CD14-positive monocyte (primary cell): ENCODE measurements at regions of chrX and their contacts with region 1.

Region 1: DNA sequence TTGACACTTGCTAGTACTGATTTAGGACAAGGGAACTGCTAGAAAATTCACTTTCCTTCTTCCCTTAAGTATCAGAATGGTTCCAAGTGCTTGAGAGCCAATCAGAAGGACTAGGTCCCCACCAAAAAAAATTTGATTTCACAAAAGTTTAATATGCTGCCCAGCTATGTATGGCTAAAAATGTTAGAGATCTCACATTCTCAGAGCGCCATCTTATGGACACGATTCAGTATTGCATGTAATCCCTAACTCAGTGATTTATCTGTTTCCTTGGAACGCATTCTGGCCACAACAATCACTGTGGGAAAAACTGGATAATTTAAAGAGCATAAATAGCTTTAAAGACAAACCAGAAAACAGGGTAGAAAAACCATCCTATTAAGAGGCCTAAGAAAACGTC is 255.1 kb upstream of the GPC4 start:
- DNase-seq: peak; percentile 15 to 43 (median 32)
- H3K4me3 ChIP-seq: no peak overlapping the region
- H3K4me3 Mint-ChIP-seq: no peak overlapping the region
- H3K27ac ChIP-seq: no peak overlapping the region
- H3K27ac Mint-ChIP-seq: no peak overlapping the region
- H3K4me1 ChIP-seq: no peaks in the 10 kb centered on the region
- H3K4me1 Mint-ChIP-seq: no peaks in the 10 kb centered on the region
- H3K27me3 ChIP-seq: no peaks in the 10 kb centered on the region
- H3K27me3 Mint-ChIP-seq: peaks cover 0 to 8% (median 0%) of the 10 kb centered on the region in 3 donors
- CTCF ChIP-seq: peak; percentile 71

Region 2: DNA sequence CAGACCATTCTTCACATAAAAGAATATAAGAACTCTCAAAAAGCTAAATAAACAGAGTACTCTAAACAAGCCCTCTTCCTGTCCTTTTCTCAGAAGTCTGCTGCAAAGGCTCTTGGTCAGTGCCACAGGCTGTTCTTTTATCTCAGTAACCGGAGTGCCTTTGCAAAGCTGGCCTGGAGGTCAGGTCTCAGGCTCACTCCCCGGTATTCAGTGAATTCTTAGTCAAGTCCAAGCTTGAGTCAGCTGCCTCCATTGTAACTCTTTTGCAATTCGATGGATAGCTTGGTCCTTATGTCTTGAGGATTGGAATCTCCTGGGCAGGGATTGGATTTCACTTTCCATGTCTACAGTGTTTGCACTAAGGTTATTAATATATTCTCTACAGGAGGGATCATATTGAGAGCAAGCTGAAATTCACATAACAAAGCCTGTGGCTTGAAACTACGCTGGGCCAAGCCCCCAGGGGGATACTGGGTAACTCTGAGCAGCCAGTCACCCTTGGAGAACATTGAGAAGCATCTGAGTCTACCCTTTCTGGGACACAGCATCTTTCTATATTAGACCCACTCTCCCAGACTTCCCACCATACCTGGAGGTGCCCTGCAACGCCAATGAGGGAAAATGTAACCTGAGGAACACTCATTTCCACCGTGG is 702.0 kb before region 1 on chrX:
- intact Hi-C with region 1: loop called in 1 of 2 experiments (anchors 10 kb)
- DNase-seq: no peak
- H3K4me3 ChIP-seq: no peak overlapping the region
- H3K4me3 Mint-ChIP-seq: no peak overlapping the region
- H3K27ac ChIP-seq: no peak overlapping the region
- H3K27ac Mint-ChIP-seq: no peak overlapping the region
- H3K4me1 ChIP-seq: no peaks in the 10 kb centered on the region
- H3K4me1 Mint-ChIP-seq: no peaks in the 10 kb centered on the region
- H3K27me3 ChIP-seq: peaks cover 0 to 14% of the 10 kb centered on the region in 2 donors
- H3K27me3 Mint-ChIP-seq: peaks cover 5 to 15% (median 6%) of the 10 kb centered on the region in 3 donors
- CTCF ChIP-seq: no peak

Region 3: DNA sequence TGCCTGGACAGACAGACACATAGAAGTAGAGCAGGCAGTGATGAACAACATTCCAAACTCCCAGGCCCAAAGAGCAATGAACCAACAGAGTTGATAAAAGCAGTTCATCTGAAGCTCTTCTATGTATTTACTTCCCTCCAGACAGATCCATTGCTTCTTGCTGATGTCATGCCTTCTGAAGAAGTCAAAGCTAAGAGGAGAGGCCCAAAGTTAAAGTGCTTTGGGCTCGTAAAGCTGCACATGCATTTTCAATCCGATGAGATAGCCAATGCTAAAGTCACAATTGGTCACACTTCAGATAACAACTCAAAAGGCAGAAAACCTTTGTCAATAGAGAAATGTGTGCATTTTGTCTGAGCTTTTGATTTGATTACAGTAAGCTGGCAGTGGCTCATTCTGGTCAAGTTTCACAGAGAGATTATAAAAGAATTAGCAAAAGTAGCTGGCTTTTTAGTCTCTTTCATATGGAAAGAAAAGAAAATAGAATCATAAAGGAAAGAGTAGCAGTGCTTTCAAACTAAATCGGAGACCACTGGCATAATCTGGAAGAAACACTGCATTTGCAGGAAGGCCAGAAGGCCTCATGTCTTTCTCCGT is 337.1 kb before region 1 on chrX:
- intact Hi-C with region 1: loop called in 1 of 2 experiments (anchors 5 kb)
- DNase-seq: no peak
- H3K4me3 ChIP-seq: no peak overlapping the region
- H3K4me3 Mint-ChIP-seq: no peak overlapping the region
- H3K27ac ChIP-seq: no peak overlapping the region
- H3K27ac Mint-ChIP-seq: no peak overlapping the region
- H3K4me1 ChIP-seq: no peaks in the 10 kb centered on the region
- H3K4me1 Mint-ChIP-seq: peaks cover 2% of the 10 kb centered on the region
- H3K27me3 ChIP-seq: no peaks in the 10 kb centered on the region
- H3K27me3 Mint-ChIP-seq: peaks cover 0 to 3% (median 2%) of the 10 kb centered on the region in 3 donors
- CTCF ChIP-seq: no peak